ENCODE measurements at regions of chr6 and their contacts with region 1.

Region 1: GRCh38 chr6:28124102-28124970 is at the start of gene ZSCAN16:
- DNase-seq: peak; percentile 81
- ATAC-seq: peak; percentile 99
- H3K4me3 Mint-ChIP-seq: peak within 1 kb of the TSS; percentile 92
- H3K27ac Mint-ChIP-seq: peak within 1 kb of the TSS; percentile 90
- H3K4me1 Mint-ChIP-seq: peaks cover 44% of the 10 kb centered on the region
- H3K27me3 Mint-ChIP-seq: no peaks in the 10 kb centered on the region
- total RNA-seq, gene ZSCAN16: 2.9 to 4.5 TPM

Region 2: DNA sequence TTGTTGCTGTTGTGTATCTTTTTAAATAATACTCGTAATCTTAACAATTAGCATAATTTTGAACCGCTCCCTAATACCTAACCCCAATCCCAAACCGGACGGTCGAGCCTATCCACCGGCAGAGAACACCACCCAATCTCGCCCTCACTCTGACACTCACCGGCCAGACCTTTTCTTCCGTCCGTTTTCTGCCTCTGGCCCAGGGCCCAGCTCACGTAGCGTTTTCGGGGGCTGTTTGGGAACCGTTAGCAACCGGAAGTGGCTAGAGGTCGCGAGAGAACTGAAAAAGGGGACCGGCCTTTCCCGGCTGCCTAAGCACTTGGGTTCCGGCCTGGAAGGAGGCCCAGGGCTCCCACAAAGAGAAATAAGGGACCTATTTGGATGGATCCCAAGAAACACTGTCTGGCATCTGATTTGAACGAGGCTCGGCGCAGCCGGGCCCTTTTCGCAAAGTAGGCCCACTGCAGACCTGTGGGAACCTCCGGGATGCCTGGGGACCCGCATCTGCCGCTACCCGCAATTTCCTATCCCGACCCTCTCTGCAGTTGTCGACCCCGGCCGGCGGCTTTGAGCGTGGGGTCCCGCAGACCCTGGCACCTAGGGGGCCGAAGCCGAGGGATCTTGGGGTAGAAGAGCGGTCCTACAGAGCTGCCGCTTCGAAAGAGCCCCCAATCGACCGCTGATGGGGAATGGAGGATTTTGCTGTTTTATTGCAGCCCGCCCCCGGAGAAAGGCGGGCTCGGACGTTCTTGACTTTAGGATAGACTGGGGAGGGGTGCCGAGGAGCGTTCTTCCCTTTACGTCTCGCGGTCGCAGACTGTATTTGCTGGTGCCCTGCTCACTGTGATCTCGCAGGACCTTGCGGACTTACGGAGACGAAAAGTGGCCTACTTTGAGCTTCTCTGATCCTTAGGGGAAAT is 12.5 kb after region 1 on chr6:
- CTCF ChIA-PET with region 1: interaction called, 9 read pairs
- POLR2A ChIA-PET with region 1: interaction called, 24 read pairs
- DNase-seq: peak; percentile 83
- ATAC-seq: peak; percentile 67
- H3K4me3 Mint-ChIP-seq: peak overlapping the region; percentile 84
- H3K27ac Mint-ChIP-seq: peak overlapping the region; percentile 90
- H3K4me1 Mint-ChIP-seq: peaks cover 61% of the 10 kb centered on the region
- H3K27me3 Mint-ChIP-seq: no peaks in the 10 kb centered on the region

Region 3: DNA sequence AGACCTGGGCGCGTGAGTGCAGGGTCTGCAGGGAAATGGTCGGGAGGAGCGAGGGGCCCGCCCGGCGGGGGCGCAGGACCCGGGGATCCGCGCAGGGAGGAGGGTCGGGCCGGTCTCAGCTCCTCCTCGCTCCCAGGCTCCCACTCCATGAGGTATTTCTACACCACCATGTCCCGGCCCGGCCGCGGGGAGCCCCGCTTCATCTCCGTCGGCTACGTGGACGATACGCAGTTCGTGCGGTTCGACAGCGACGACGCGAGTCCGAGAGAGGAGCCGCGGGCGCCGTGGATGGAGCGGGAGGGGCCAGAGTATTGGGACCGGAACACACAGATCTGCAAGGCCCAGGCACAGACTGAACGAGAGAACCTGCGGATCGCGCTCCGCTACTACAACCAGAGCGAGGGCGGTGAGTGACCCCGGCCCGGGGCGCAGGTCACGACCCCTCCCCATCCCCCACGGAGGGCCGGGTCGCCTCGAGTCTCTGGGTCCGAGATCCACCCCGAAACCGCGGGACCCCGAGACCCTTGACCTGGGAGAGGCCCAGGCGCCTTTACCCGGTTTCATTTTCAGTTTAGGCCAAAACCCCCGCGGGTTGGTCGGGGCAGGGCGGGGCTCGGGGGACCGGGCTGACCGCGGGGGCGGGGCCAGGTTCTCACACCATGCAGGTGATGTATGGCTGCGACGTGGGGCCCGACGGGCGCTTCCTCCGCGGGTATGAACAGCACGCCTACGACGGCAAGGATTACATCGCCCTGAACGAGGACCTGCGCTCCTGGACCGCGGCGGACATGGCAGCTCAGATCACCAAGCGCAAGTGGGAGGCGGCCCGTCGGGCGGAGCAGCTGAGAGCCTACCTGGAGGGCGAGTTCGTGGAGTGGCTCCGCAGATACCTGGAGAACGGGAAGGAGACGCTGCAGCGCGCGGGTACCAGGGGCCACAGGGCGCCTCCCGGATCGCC is 1763.8 kb after region 1 on chr6:
- CTCF ChIA-PET with region 1: no interaction called
- POLR2A ChIA-PET with region 1: no interaction called
- DNase-seq: peak; percentile 89
- ATAC-seq: peak; percentile 87
- H3K4me3 Mint-ChIP-seq: peak overlapping the region; percentile 80
- H3K27ac Mint-ChIP-seq: peak overlapping the region; percentile 89
- H3K4me1 Mint-ChIP-seq: peaks cover 15% of the 10 kb centered on the region
- H3K27me3 Mint-ChIP-seq: peaks cover 7% of the 10 kb centered on the region

Measured in activated CD8-positive, alpha-beta T cell treated with anti-CD3 and anti-CD28 coated beads, Interleukin-2, amount 10 ng/mL, durations not matched to agents 7 days and 5 days (primary cell).